ENCODE measurements at regions of chr9 and their contacts with region 1.

Region 1: DNA sequence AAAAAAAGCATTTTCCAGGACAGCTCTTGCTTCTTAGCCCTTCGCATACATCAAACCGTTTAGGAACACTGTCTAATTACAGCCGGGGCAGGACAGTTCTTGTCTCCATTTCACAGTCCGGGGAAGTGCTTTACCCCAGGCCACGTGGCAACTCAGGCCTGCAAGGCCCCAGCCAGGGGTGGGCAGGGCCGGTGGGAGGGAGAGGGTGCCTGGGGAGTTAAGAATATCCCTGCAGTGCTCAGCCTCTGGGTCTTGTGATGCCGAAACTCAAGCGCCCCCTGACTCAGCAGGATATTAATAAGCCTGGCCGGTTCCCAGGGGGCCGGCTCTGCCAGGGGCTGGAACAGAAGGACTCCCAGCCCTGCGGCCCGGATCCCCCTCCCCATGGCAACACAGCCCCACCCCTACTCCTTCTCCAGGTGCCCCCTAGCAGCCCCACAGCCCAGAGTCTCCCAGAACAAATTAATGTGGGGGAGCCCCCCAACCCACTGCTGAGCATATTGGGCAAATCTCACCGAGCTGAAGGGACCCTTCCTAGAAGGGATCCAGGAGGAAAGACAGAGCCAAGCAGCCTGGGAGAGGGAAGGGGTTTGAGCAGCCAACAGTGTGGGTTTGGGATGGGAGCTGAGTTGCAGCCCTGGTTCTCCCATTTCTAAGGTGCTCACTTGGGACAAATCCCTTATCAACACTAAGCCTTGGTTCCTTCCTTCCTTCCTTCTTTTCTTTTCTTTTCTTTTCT is 45.3 kb downstream of the PLPP7 start:
- DNase-seq: peak; percentile 16
- ATAC-seq: peak; percentile 10; the same call in 1 of the 2 replicates
- H3K4me3 Mint-ChIP-seq: no peak overlapping the region
- H3K27ac Mint-ChIP-seq: no peak overlapping the region
- H3K4me1 Mint-ChIP-seq: peaks cover 23% of the 10 kb centered on the region
- H3K27me3 Mint-ChIP-seq: no peaks in the 10 kb centered on the region
- CTCF ChIP-seq: no peak

Region 2: GRCh38 chr9:131178382-131178781 is 156.4 kb before region 1 on chr9:
- CTCF ChIA-PET with region 1: interaction called, 55 read pairs
- POLR2A ChIA-PET with region 1: no interaction called
- DNase-seq: peak; percentile 85
- ATAC-seq: peak; percentile 99
- H3K4me3 Mint-ChIP-seq: no peak overlapping the region
- H3K27ac Mint-ChIP-seq: peak overlapping the region; percentile 64; the same call in 1 of the 2 replicates
- H3K4me1 Mint-ChIP-seq: no peaks in the 10 kb centered on the region
- H3K27me3 Mint-ChIP-seq: no peaks in the 10 kb centered on the region
- CTCF ChIP-seq: peak; percentile 82

Region 3: DNA sequence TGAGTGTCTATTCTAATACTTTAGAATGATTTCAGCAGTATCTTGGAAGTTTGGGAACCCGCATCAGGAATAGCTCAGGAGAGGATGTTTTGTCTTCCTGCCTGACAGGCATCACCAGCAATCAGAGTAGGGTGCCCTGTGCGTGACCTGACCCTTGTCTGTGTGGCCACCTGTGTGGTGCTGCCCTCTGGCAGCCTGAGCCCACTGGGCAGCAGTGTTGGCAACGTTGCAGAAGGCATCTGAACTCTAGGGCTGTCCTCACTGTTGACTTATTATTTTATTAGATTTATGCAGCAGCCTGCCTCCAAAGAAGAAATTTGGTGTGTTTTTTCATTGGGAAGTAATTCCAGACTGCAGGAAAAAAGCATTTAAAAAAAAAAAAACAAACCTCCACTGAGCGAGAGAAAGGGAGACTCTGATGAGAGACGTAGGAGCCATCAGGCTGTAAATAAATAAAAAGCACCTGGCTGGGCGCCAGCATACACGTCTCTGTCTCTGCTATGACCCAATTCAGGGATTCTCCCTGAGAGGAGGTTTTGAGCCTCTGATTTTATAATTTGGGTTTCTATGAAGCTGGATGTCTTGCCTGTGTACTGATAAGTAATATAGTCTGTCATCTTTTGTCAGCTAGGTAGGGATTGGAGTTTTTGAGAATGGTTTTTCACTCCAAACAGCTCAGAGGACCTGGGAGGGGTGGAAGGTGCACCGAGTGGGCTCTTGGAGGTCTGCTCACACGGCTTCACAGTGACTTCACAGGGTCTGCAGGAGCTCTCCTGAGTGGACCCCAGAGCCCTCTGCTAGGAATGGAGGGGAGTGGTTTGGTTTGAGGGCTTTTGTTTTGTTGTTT is 107.5 kb before region 1 on chr9:
- CTCF ChIA-PET with region 1: interaction called, 23 read pairs
- POLR2A ChIA-PET with region 1: no interaction called
- DNase-seq: no peak
- ATAC-seq: peak; percentile 51
- H3K4me3 Mint-ChIP-seq: peak overlapping the region; percentile 27
- H3K27ac Mint-ChIP-seq: peak overlapping the region; percentile 81
- H3K4me1 Mint-ChIP-seq: peaks cover 30% of the 10 kb centered on the region
- H3K27me3 Mint-ChIP-seq: no peaks in the 10 kb centered on the region
- CTCF ChIP-seq: no peak

Region 4: DNA sequence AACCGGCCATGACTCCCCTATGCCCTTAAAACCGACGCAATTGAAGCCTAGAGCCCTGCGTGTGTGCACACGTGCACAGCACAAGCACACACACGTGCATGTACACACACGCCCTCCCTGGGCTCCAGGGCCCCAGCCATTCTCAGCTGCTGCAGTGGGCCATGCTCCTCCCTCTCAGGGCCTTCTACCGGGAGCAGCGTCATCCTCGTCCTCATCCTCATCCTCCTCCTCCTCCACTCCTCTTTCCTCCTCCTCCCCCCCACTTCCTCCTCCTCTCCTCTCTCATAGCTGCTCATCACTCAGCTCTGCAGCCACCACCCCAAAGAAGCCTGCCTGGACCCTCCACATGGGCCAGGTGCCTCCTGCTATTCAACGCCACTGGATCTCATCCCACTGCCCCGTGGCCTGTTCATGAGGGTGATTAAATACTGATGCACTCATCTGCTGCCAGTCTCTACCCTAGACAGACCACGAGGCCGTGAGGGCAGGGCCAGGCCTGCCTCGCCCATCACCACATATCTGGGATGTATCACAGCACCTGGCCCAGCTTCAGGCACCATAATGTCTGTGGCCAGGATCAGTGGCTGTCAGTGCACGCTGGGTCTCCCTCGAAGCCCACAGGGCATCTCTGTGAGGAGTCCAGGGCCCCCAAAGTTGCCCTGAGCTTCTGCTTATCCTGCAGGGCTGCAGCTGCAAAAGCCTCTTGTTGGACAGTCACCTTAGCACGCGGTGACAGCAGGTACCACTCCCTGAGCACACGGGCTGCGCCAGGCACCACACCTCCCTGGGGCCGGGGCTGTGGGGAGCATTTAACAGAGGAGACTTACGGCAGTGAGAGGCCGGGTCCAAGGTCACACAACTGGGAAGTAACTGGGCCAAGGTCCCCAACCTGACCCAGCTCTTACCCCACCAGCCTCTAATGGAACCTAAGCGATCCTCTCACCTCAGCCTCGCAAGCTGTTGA is 68.2 kb before region 1 on chr9:
- CTCF ChIA-PET with region 1: interaction called, 57 read pairs
- POLR2A ChIA-PET with region 1: no interaction called
- DNase-seq: no peak
- ATAC-seq: no peak
- H3K4me3 Mint-ChIP-seq: no peak overlapping the region
- H3K27ac Mint-ChIP-seq: peak overlapping the region; percentile 90
- H3K4me1 Mint-ChIP-seq: peaks cover 15% of the 10 kb centered on the region
- H3K27me3 Mint-ChIP-seq: no peaks in the 10 kb centered on the region
- CTCF ChIP-seq: no peak

Region 5: GRCh38 chr9:131297903-131298302 is 36.9 kb before region 1 on chr9:
- CTCF ChIA-PET with region 1: interaction called, 49 read pairs
- POLR2A ChIA-PET with region 1: no interaction called
- DNase-seq: no peak
- ATAC-seq: no peak
- H3K4me3 Mint-ChIP-seq: no peak overlapping the region
- H3K27ac Mint-ChIP-seq: peak overlapping the region; percentile 30
- H3K4me1 Mint-ChIP-seq: no peaks in the 10 kb centered on the region
- H3K27me3 Mint-ChIP-seq: no peaks in the 10 kb centered on the region
- CTCF ChIP-seq: no peak

Region 6: GRCh38 chr9:131320031-131320685 is 14.6 kb before region 1 on chr9:
- CTCF ChIA-PET with region 1: interaction called, 33 read pairs
- POLR2A ChIA-PET with region 1: no interaction called
- DNase-seq: no peak
- ATAC-seq: no peak
- H3K4me3 Mint-ChIP-seq: no peak overlapping the region
- H3K27ac Mint-ChIP-seq: no peak overlapping the region
- H3K4me1 Mint-ChIP-seq: no peaks in the 10 kb centered on the region
- H3K27me3 Mint-ChIP-seq: no peaks in the 10 kb centered on the region
- CTCF ChIP-seq: no peak

Measured in WTC11 (cell line).